Breast epithelium (tissue), 4 donors: ENCODE measurements at regions of chr21 and their contacts with region 1.

Region 1: DNA sequence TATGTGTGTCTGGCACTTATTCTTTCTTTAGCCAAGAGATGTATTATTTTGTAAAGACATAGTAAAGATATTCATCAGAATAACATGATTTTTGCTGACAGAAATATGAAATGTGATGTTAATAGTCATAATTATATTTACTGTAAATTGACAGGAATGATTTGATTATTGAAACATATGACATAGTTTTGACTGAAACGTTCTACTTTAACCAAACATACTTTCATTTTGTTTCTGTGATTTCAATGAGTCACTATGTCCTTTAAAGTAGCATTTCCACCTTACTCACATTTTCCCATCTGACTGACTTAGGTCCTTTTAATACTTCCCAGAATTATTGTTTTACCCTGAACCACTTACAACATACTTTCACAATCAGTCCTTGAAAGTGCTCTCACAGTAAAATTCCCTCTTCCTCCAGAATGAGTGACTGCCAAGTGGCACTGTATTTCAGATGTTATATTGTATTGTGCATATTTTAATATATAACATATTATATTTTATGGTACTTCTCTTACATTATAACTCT is 437.9 kb downstream of the NCAM2 start:
- DNase-seq: no peak
- H3K4me3 ChIP-seq: no peak overlapping the region
- H3K27ac ChIP-seq: no peak overlapping the region
- H3K4me1 ChIP-seq: no peaks in the 10 kb centered on the region
- H3K27me3 ChIP-seq: no peaks in the 10 kb centered on the region
- CTCF ChIP-seq: no peak
- POLR2A ChIP-seq: no peak

Region 2: DNA sequence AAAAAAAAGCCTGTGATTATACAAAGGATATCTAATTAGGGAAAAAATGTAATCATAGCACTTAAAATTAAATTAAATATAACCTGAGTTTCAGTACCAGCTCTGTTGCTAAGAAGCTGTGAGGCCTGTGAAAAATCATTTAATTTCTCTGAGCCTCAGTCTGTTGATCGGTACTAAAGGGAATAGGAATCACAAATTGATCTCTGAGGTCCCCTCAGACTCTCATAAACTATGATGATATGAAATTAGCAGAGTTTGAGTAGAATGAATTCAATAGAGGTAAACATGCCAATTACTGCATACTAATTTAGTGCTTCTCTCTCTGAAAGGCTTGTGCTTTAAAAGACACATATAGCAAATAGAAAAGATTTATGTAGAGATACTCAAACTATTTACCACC is 854.7 kb before region 1 on chr21:
- intact Hi-C with region 1: no loop called
- DNase-seq: no peak
- H3K4me3 ChIP-seq: no peak overlapping the region
- H3K27ac ChIP-seq: no peak overlapping the region
- H3K4me1 ChIP-seq: no peaks in the 10 kb centered on the region
- H3K27me3 ChIP-seq: no peaks in the 10 kb centered on the region
- CTCF ChIP-seq: no peak
- POLR2A ChIP-seq: no peak

Region 3: GRCh38 chr21:21295303-21295702 is 140.8 kb before region 1 on chr21:
- intact Hi-C with region 1: no loop called
- DNase-seq: no peak
- H3K4me3 ChIP-seq: no peak overlapping the region
- H3K27ac ChIP-seq: no peak overlapping the region
- H3K4me1 ChIP-seq: no peaks in the 10 kb centered on the region
- H3K27me3 ChIP-seq: no peaks in the 10 kb centered on the region
- CTCF ChIP-seq: no peak
- POLR2A ChIP-seq: no peak

Region 4: DNA sequence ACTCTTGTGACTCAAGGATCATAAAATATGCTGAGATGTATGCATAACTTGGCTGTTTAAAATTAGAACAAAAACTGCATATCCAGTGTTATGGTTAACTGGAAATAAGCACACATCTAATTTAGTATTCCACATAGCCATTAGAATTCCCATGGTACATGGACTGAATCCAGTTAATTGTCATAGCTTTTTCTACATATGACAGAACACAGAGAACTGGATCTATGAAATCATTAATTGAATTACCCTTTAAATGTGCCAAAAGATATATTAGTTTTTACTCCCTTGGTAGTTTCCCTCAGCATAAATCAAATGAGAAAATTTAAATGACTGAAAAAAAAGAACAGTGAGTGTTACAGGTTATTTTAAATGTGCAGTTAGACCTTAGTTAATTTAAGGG is 42.0 kb before region 1 on chr21:
- intact Hi-C with region 1: loop called (anchors 2 kb)
- DNase-seq: no peak
- H3K4me3 ChIP-seq: no peak overlapping the region
- H3K27ac ChIP-seq: no peak overlapping the region
- H3K4me1 ChIP-seq: no peaks in the 10 kb centered on the region
- H3K27me3 ChIP-seq: no peaks in the 10 kb centered on the region
- CTCF ChIP-seq: no peak
- POLR2A ChIP-seq: no peak

Region 5: DNA sequence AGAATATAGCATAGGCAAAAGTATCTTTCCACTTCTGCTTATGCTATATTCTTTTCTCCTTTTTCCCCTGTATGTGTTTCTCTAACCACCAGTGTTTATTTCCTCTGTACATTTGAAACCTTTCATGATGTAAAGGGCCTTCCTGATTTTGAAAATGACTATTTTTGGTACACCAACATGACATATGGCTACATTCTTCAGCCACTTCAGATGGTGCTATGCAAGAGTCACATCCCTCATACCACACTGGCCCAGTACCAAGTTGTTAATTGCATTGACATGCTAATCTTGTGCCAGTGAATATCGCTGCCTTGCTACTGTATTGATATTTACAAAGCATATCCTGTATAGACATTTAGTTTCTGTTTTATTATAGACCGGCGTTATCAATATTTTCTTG is 29.2 kb before region 1 on chr21:
- intact Hi-C with region 1: loop called (anchors 2 kb)
- DNase-seq: no peak
- H3K4me3 ChIP-seq: no peak overlapping the region
- H3K27ac ChIP-seq: no peak overlapping the region
- H3K4me1 ChIP-seq: no peaks in the 10 kb centered on the region
- H3K27me3 ChIP-seq: no peaks in the 10 kb centered on the region
- CTCF ChIP-seq: no peak
- POLR2A ChIP-seq: no peak